CD4-positive, alpha-beta memory T cell (primary cell): ENCODE measurements at regions of chr12 and their contacts with region 1.

Region 1: GRCh38 chr12:55926738-55927587 is 731 bp downstream of the PYM1 start:
- DNase-seq: peak; percentile 83 to 91 (median 85)
- H3K4me3 ChIP-seq: peak overlapping the region; percentile 95 to 100
- H3K4me3 Mint-ChIP-seq: peak overlapping the region; percentile 97 to 100 (median 99)
- H3K27ac ChIP-seq: peak overlapping the region; percentile 88
- H3K27ac Mint-ChIP-seq: peak overlapping the region; percentile 92 to 99 (median 96)
- H3K4me1 ChIP-seq: peaks cover 51% of the 10 kb centered on the region
- H3K4me1 Mint-ChIP-seq: peaks cover 36 to 79% (median 46%) of the 10 kb centered on the region in 4 donors
- H3K27me3 ChIP-seq: no peaks in the 10 kb centered on the region
- H3K27me3 Mint-ChIP-seq: no peaks in the 10 kb centered on the region

Region 2: GRCh38 chr12:55728939-55729823 is 197.8 kb before region 1 on chr12 and contains the start of gene CD63:
- CTCF ChIA-PET with region 1: no interaction called
- POLR2A ChIA-PET with region 1: interaction called, 17 read pairs
- intact Hi-C with region 1: no loop called
- DNase-seq: peak; percentile 34 to 71 (median 35)
- H3K4me3 ChIP-seq: peak within 1 kb of the TSS; percentile 79 to 86
- H3K4me3 Mint-ChIP-seq: peak within 1 kb of the TSS; percentile 91 to 94 (median 91)
- H3K27ac ChIP-seq: peak within 1 kb of the TSS; percentile 60
- H3K27ac Mint-ChIP-seq: peak within 1 kb of the TSS; percentile 75 to 97 (median 95)
- H3K4me1 ChIP-seq: peaks cover 28% of the 10 kb centered on the region
- H3K4me1 Mint-ChIP-seq: peaks cover 33 to 52% (median 42%) of the 10 kb centered on the region in 4 donors
- H3K27me3 ChIP-seq: no peaks in the 10 kb centered on the region
- H3K27me3 Mint-ChIP-seq: no peaks in the 10 kb centered on the region
- total RNA-seq, gene CD63: 76.4 to 79.7 TPM

Region 3: DNA sequence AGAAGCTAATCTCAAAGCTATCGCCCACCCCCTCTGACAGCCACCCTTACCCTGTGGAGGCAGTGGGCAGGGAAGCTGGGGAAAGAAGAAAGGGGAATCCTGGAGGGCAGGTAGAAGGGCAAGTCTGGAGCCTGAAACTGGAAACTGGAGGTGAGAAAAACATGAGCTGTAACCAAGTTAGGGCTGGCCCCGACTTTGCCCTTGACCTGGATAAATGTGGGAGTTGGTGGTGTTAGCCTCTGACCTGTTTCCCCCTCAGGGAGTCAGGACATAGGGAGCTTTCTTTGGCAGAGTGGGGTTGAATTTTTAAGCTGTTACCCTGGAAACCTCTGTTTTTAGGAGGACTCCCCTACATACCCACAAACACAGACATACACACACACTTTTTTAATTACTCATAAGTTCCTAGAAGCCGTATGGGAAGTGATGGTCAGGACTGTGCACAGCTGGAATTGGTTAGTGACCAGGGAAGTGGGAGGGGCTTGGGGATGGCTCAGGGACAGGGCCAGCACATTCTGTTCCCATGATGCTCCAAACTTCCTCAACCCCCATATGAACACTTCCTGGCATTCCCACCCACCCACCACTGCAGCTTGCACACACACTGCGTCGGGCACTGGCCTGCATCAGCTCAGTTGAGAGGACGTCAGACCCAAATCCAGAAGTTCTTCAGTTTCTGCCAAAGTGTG is 79.2 kb before region 1 on chr12:
- CTCF ChIA-PET with region 1: no interaction called
- POLR2A ChIA-PET with region 1: no interaction called
- intact Hi-C with region 1: no loop called
- DNase-seq: no peak
- H3K4me3 ChIP-seq: no peak overlapping the region
- H3K4me3 Mint-ChIP-seq: no peak overlapping the region
- H3K27ac ChIP-seq: no peak overlapping the region
- H3K27ac Mint-ChIP-seq: no peak overlapping the region
- H3K4me1 ChIP-seq: no peaks in the 10 kb centered on the region
- H3K4me1 Mint-ChIP-seq: no peaks in the 10 kb centered on the region
- H3K27me3 ChIP-seq: no peaks in the 10 kb centered on the region
- H3K27me3 Mint-ChIP-seq: peaks cover 2 to 6% of the 10 kb centered on the region in 2 donors

Region 4: GRCh38 chr12:55940065-55940732 is 13.2 kb after region 1 on chr12:
- CTCF ChIA-PET with region 1: interaction called, 107 read pairs
- POLR2A ChIA-PET with region 1: interaction called, 1,214 read pairs
- intact Hi-C with region 1: loop called (anchors 1 kb)
- DNase-seq: peak; percentile 83 to 86 (median 84)
- H3K4me3 ChIP-seq: peak overlapping the region in 1 of 2 donors; percentile 4
- H3K4me3 Mint-ChIP-seq: peak overlapping the region in 7 of 8 donors; percentile 32 to 76 (median 62)
- H3K27ac ChIP-seq: peak overlapping the region; percentile 48
- H3K27ac Mint-ChIP-seq: peak overlapping the region; percentile 82 to 96 (median 92)
- H3K4me1 ChIP-seq: peaks cover 66% of the 10 kb centered on the region
- H3K4me1 Mint-ChIP-seq: peaks cover 56 to 89% (median 66%) of the 10 kb centered on the region in 4 donors
- H3K27me3 ChIP-seq: no peaks in the 10 kb centered on the region
- H3K27me3 Mint-ChIP-seq: no peaks in the 10 kb centered on the region

Region 5: GRCh38 chr12:55946553-55946952 is 19.6 kb after region 1 on chr12:
- CTCF ChIA-PET with region 1: interaction called, 13 read pairs
- POLR2A ChIA-PET with region 1: interaction called, 1,214 read pairs
- intact Hi-C with region 1: no loop called
- DNase-seq: no peak
- H3K4me3 ChIP-seq: no peak overlapping the region
- H3K4me3 Mint-ChIP-seq: no peak overlapping the region
- H3K27ac ChIP-seq: no peak overlapping the region
- H3K27ac Mint-ChIP-seq: peak overlapping the region in 6 of 7 donors; percentile 43 to 74 (median 58)
- H3K4me1 ChIP-seq: peaks cover 9% of the 10 kb centered on the region
- H3K4me1 Mint-ChIP-seq: peaks cover 17 to 44% (median 26%) of the 10 kb centered on the region in 4 donors
- H3K27me3 ChIP-seq: no peaks in the 10 kb centered on the region
- H3K27me3 Mint-ChIP-seq: no peaks in the 10 kb centered on the region

Region 6: GRCh38 chr12:55966408-55967281 is 39.7 kb after region 1 on chr12 and contains the start of gene CDK2:
- CTCF ChIA-PET with region 1: interaction called, 5 read pairs
- POLR2A ChIA-PET with region 1: interaction called, 1,214 read pairs
- intact Hi-C with region 1: no loop called
- DNase-seq: peak; percentile 76 to 85 (median 80)
- H3K4me3 ChIP-seq: peak within 1 kb of the TSS; percentile 57 to 77
- H3K4me3 Mint-ChIP-seq: peak within 1 kb of the TSS; percentile 86 to 96 (median 90)
- H3K27ac ChIP-seq: peak within 1 kb of the TSS; percentile 63
- H3K27ac Mint-ChIP-seq: peak within 1 kb of the TSS; percentile 60 to 92 (median 89)
- H3K4me1 ChIP-seq: peaks cover 19% of the 10 kb centered on the region
- H3K4me1 Mint-ChIP-seq: peaks cover 15 to 38% (median 24%) of the 10 kb centered on the region in 4 donors
- H3K27me3 ChIP-seq: no peaks in the 10 kb centered on the region
- H3K27me3 Mint-ChIP-seq: no peaks in the 10 kb centered on the region
- total RNA-seq, gene CDK2: 17.5 to 21.5 TPM

Region 7: GRCh38 chr12:56041552-56042429 is 114.8 kb after region 1 on chr12 and contains the start of gene RPS26:
- CTCF ChIA-PET with region 1: interaction called, 3 read pairs
- POLR2A ChIA-PET with region 1: interaction called, 7 read pairs
- intact Hi-C with region 1: loop called (anchors 2 kb)
- DNase-seq: peak; percentile 95 to 98 (median 96)
- H3K4me3 ChIP-seq: peak within 1 kb of the TSS; percentile 94 to 97
- H3K4me3 Mint-ChIP-seq: peak within 1 kb of the TSS; percentile 98 to 100 (median 99)
- H3K27ac ChIP-seq: peak within 1 kb of the TSS; percentile 87
- H3K27ac Mint-ChIP-seq: peak within 1 kb of the TSS; percentile 96 to 100 (median 99)
- H3K4me1 ChIP-seq: peaks cover 23% of the 10 kb centered on the region
- H3K4me1 Mint-ChIP-seq: peaks cover 15 to 45% (median 23%) of the 10 kb centered on the region in 4 donors
- H3K27me3 ChIP-seq: no peaks in the 10 kb centered on the region
- H3K27me3 Mint-ChIP-seq: no peaks in the 10 kb centered on the region
- total RNA-seq, gene RPS26: 55.6 to 55.8 TPM